H1 (cell line): ENCODE measurements at regions of chr1 and their contacts with region 1.

Region 1: GRCh38 chr1:99481391-99481996 is 164.4 kb upstream of the PALMD start:
- DNase-seq: no peak
- H3K4me3 ChIP-seq: no peak overlapping the region
- H3K27ac ChIP-seq: no peak overlapping the region
- H3K4me1 ChIP-seq: no peaks in the 10 kb centered on the region
- H3K27me3 ChIP-seq: no peaks in the 10 kb centered on the region
- CTCF ChIP-seq: peak in 2 of 3 experiments; percentile 58 to 69; a peak in 2 of 4 replicates
- EP300 ChIP-seq: no peak
- POLR2A ChIP-seq: no peak
- RAD21 ChIP-seq: peak; percentile 83 to 86

Region 2: GRCh38 chr1:99173282-99173681 is 308.2 kb before region 1 on chr1:
- CTCF ChIA-PET with region 1: interaction called, 13 read pairs
- POLR2A ChIA-PET with region 1: no interaction called
- DNase-seq: no peak
- H3K4me3 ChIP-seq: no peak overlapping the region
- H3K27ac ChIP-seq: no peak overlapping the region
- H3K4me1 ChIP-seq: no peaks in the 10 kb centered on the region
- H3K27me3 ChIP-seq: no peaks in the 10 kb centered on the region
- CTCF ChIP-seq: no peak
- EP300 ChIP-seq: no peak
- POLR2A ChIP-seq: no peak
- RAD21 ChIP-seq: no peak

Region 3: GRCh38 chr1:99282536-99282935 is 199.0 kb before region 1 on chr1:
- CTCF ChIA-PET with region 1: no interaction called
- POLR2A ChIA-PET with region 1: no interaction called
- DNase-seq: no peak
- H3K4me3 ChIP-seq: no peak overlapping the region
- H3K27ac ChIP-seq: no peak overlapping the region
- H3K4me1 ChIP-seq: no peaks in the 10 kb centered on the region
- H3K27me3 ChIP-seq: peaks cover 0 to 1% (median 0%) of the 10 kb centered on the region in 4 experiments; a peak in 1 of 7 replicates
- CTCF ChIP-seq: no peak
- EP300 ChIP-seq: no peak
- POLR2A ChIP-seq: no peak
- RAD21 ChIP-seq: no peak

Region 4: DNA sequence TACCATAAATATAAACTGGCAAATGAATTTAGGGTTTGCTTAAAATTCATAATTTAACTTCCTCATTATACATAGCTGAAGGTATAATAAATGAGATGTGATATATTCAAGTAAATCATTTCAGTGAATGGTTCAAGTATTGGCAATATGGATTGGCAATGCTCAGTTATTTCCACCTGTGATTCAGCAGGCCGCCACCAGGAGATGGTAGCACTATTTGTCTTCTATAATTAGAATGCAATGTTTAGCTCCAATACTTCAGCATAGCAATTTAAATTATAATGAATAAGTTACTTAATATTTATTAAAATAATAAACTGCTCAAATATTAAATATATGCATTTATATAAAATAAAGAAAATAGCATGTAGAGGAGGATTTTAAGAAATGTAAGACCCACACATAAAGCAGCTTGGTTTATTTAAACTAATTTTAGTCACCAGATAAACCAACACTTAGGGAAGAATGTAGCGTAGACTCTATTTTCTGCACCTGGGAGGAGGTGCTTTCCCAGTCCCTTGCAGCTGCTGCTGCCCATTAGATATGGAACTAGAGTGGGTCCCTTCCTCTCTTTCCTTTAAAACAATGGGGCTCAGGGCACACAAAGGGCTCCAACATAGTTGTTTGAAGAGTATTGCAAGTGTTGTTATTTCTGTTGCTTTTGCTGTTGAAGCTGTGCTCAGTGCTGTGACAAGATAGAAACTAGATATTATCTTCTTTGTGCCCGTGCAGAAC is 155.1 kb before region 1 on chr1:
- CTCF ChIA-PET with region 1: interaction called, 11 read pairs
- POLR2A ChIA-PET with region 1: no interaction called
- DNase-seq: no peak
- H3K4me3 ChIP-seq: no peak overlapping the region
- H3K27ac ChIP-seq: no peak overlapping the region; the same call in 1 of the 2 replicates
- H3K4me1 ChIP-seq: peaks cover 0 to 8% (median 5%) of the 10 kb centered on the region in 4 experiments; a peak in 3 of 7 replicates
- H3K27me3 ChIP-seq: no peaks in the 10 kb centered on the region
- CTCF ChIP-seq: peak in 2 of 3 experiments; percentile 21 to 48; a peak in 2 of 4 replicates
- EP300 ChIP-seq: no peak
- POLR2A ChIP-seq: no peak
- RAD21 ChIP-seq: peak in 1 of 2 experiments; percentile 43; a peak in 3 of 4 replicates

Region 5: GRCh38 chr1:99496067-99496466 is 14.6 kb after region 1 on chr1:
- CTCF ChIA-PET with region 1: interaction called, 13 read pairs
- POLR2A ChIA-PET with region 1: no interaction called
- DNase-seq: no peak
- H3K4me3 ChIP-seq: no peak overlapping the region
- H3K27ac ChIP-seq: no peak overlapping the region
- H3K4me1 ChIP-seq: no peaks in the 10 kb centered on the region; a peak in 1 of 7 replicates
- H3K27me3 ChIP-seq: no peaks in the 10 kb centered on the region
- CTCF ChIP-seq: no peak
- EP300 ChIP-seq: no peak
- POLR2A ChIP-seq: no peak
- RAD21 ChIP-seq: no peak

Region 6: GRCh38 chr1:99685516-99686180 is 204.2 kb after region 1 on chr1:
- CTCF ChIA-PET with region 1: interaction called, 19 read pairs
- POLR2A ChIA-PET with region 1: no interaction called
- DNase-seq: peak; percentile 13 to 68
- H3K4me3 ChIP-seq: no peak overlapping the region
- H3K27ac ChIP-seq: no peak overlapping the region
- H3K4me1 ChIP-seq: no peaks in the 10 kb centered on the region
- H3K27me3 ChIP-seq: no peaks in the 10 kb centered on the region
- CTCF ChIP-seq: peak; percentile 44 to 77 (median 48)
- EP300 ChIP-seq: no peak
- POLR2A ChIP-seq: no peak
- RAD21 ChIP-seq: peak; percentile 65 to 74

Region 7: DNA sequence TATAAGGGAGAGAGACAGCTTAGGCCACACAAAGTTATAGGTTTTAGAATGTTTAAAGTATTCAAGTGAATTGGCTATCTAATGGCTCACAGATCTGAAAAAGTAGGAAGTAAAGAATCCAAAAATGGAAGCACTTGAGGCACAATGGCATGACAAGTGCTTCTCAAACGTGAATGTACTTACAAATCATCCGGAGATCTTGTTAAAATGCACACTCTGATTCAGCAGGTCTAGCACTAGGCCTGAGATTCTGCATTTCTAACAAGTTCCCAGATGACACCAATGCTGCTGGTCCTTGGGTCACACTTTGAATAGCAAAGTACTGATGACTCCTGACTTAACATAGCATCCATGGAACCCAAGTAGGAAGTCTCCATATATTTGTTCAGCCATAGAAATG is 347.8 kb after region 1 on chr1:
- CTCF ChIA-PET with region 1: no interaction called
- POLR2A ChIA-PET with region 1: no interaction called
- DNase-seq: no peak
- H3K4me3 ChIP-seq: no peak overlapping the region
- H3K27ac ChIP-seq: no peak overlapping the region
- H3K4me1 ChIP-seq: no peaks in the 10 kb centered on the region
- H3K27me3 ChIP-seq: no peaks in the 10 kb centered on the region
- CTCF ChIP-seq: no peak
- EP300 ChIP-seq: no peak
- POLR2A ChIP-seq: no peak
- RAD21 ChIP-seq: no peak